Activated CD8-positive, alpha-beta memory T cell treated with anti-CD3 and anti-CD28 coated beads, Interleukin-2, amount 10 ng/mL, durations not matched to agents 7 days and 5 days (primary cell): ENCODE measurements at regions of chr9 and their contacts with region 1.

Region 1: DNA sequence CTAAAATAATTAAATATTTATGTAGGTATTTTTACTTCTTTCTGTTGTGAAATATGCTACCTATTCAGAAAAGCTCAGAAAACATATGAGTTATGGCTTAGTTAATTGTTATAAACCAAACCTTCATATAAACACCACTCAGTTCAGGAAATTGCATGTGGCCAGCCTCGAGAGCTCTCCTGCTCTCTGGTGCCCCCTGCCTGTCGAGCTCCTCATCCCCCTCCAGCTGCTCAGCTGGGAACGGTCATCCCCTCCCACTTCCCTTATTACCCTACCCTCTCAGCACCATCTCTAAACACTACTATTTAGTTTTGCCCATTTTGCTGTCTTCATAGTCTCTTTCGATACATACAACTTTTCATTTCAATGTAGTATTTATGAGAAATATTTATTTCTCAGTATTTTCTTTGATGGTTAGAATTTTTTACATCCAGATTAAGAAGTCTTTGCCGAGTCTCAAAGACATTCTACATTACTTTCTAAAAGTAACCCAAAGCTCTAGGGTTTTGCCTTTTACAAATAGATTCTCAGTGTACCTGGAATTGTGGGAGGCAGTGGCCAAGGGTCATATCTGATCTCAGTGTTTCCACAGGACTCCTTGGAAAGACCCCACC is 51.2 kb upstream of the SEMA4D start:
- DNase-seq: peak; percentile 89
- ATAC-seq: peak; percentile 99
- H3K4me3 Mint-ChIP-seq: no peak overlapping the region
- H3K27ac Mint-ChIP-seq: peak overlapping the region; percentile 47
- H3K4me1 Mint-ChIP-seq: peaks cover 20% of the 10 kb centered on the region
- H3K27me3 Mint-ChIP-seq: peaks cover 19% of the 10 kb centered on the region

Region 2: GRCh38 chr9:89418882-89419640 is 130.1 kb before region 1 on chr9:
- CTCF ChIA-PET with region 1: interaction called, 12 read pairs
- DNase-seq: peak; percentile 93
- ATAC-seq: peak; percentile 48
- H3K4me3 Mint-ChIP-seq: peak overlapping the region; percentile 91
- H3K27ac Mint-ChIP-seq: peak overlapping the region; percentile 97
- H3K4me1 Mint-ChIP-seq: peaks cover 98% of the 10 kb centered on the region
- H3K27me3 Mint-ChIP-seq: no peaks in the 10 kb centered on the region

Region 3: GRCh38 chr9:89448381-89448780 is 100.8 kb before region 1 on chr9:
- CTCF ChIA-PET with region 1: interaction called, 12 read pairs
- DNase-seq: peak; percentile 62
- ATAC-seq: peak; percentile 42
- H3K4me3 Mint-ChIP-seq: no peak overlapping the region
- H3K27ac Mint-ChIP-seq: peak overlapping the region; percentile 83
- H3K4me1 Mint-ChIP-seq: peaks cover 88% of the 10 kb centered on the region
- H3K27me3 Mint-ChIP-seq: no peaks in the 10 kb centered on the region

Region 4: DNA sequence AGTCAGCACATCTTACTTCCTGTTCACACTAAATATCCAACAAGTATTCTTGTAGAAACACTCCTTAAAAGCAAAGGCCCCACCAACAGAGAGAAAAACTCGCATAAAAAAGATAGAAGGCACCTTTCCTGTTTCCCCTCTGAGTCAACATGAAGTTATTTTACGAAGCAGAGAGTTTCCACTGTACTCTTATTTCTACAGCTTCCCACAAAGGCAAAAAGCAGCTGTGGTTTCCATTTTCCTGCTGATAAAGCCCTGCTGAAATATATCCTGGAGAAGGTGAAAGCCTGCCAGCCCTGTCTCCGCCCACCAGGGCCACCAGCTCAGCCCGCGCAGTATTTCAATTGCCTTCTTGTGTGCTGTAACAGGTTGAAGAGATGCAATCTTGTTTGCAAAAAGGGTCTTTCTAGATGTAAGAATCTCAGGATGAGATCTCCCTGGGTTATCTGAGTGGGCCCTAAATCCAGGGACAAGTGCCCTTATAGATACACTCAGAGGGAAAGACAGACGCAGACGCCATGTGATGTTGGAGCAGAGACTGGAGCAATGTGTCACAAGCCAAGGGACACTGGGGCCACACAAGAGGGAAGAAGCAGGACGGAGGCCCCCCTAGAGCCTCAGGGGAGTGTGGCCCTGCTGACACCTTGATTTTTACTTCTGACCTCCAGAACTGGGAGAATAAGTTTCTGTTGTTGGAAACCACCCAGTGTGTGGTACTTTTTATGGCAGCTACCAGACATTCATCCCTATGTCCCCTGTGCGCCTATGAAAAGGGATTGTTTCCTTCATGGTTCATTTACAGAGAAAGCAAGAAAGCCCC is 71.1 kb before region 1 on chr9:
- CTCF ChIA-PET with region 1: interaction called, 37 read pairs
- DNase-seq: peak; percentile 74
- ATAC-seq: peak; percentile 50
- H3K4me3 Mint-ChIP-seq: peak overlapping the region; percentile 78
- H3K27ac Mint-ChIP-seq: peak overlapping the region; percentile 93
- H3K4me1 Mint-ChIP-seq: peaks cover 94% of the 10 kb centered on the region
- H3K27me3 Mint-ChIP-seq: no peaks in the 10 kb centered on the region

Region 5: DNA sequence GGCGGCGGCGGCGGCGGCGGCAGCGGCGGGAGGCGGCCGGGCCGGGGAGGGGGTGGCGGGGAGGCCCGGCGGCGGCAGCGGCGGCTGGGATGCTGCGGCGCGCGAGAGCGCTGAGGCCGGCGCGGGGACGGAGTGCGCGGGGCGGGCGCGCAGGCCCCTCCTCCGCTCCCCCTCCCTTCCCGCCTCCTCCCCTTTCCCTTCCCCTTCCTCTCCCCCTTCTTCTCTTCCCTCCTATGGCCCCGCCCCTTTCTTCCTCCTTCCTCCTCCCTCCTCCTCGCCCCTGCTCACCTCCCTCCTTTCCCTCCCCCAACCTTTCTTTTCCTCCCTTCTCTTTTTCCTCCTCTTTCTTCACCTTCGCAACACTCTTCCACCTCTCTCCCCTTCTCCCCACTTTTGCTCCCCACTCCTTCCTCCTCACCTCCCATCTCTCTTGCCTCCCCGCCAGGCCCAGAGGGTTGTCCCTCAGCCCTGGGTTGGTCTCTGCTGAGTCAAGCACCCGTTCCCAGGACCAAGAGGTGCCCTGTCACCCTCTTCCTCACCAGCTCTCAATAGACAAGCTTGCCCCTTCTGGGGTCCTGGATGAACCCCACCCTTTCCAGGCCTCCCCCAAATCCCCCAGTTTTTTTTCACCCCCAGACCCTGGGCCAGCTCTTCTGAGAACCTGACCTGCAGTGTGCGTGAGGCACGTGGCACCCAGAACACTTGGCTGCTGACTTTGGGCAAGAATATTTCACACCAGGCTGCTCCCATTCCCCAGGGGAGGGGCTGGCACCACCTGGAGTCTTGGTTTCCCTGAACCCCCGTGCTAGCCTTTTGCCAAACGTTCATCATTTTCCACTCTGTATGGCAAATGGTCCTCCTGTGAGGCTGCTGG is 50.9 kb before region 1 on chr9 and contains the start of gene SEMA4D:
- CTCF ChIA-PET with region 1: interaction called, 29 read pairs
- DNase-seq: peak; percentile 80
- ATAC-seq: peak; percentile 15
- H3K4me3 Mint-ChIP-seq: peak within 1 kb of the TSS; percentile 94
- H3K27ac Mint-ChIP-seq: peak within 1 kb of the TSS; percentile 93
- H3K4me1 Mint-ChIP-seq: peaks cover 80% of the 10 kb centered on the region
- H3K27me3 Mint-ChIP-seq: no peaks in the 10 kb centered on the region
- total RNA-seq, gene SEMA4D: 408 to 525 TPM

Region 6: DNA sequence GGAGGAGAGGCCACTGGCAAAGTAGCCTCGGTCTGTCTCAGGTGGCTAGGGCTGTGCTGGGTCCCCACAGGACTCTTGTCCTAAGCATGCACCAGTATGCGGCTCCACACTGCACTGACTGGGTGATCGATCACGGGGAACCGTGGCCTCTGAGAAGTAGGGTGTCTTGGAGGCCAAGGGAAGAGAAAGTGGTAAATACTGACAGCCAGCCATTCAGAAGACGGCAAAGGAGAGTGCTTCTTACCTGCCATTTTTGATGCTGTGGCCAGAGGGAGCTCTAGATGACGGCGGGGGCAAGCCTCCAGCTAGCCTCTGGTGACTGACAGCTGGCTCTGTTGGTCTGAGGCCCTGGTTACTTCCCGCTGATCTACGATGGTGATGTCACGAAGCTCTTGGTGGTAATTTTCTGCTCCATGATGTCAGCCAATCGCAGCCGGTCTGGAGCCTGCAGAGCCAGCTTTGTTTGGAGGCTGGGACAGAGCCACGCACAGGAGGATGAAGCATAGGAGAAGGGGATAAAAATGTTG is 15.3 kb after region 1 on chr9:
- CTCF ChIA-PET with region 1: interaction called, 12 read pairs
- DNase-seq: no peak
- ATAC-seq: no peak
- H3K4me3 Mint-ChIP-seq: no peak overlapping the region
- H3K27ac Mint-ChIP-seq: no peak overlapping the region
- H3K4me1 Mint-ChIP-seq: peaks cover 5% of the 10 kb centered on the region
- H3K27me3 Mint-ChIP-seq: peaks cover 21% of the 10 kb centered on the region

Region 7: GRCh38 chr9:89592213-89592815 is 43.2 kb after region 1 on chr9:
- CTCF ChIA-PET with region 1: no interaction called
- DNase-seq: no peak
- ATAC-seq: no peak
- H3K4me3 Mint-ChIP-seq: no peak overlapping the region
- H3K27ac Mint-ChIP-seq: no peak overlapping the region
- H3K4me1 Mint-ChIP-seq: peaks cover 2% of the 10 kb centered on the region
- H3K27me3 Mint-ChIP-seq: peaks cover 37% of the 10 kb centered on the region